ENCODE measurements at regions of chr11 and their contacts with region 1.

Region 1: DNA sequence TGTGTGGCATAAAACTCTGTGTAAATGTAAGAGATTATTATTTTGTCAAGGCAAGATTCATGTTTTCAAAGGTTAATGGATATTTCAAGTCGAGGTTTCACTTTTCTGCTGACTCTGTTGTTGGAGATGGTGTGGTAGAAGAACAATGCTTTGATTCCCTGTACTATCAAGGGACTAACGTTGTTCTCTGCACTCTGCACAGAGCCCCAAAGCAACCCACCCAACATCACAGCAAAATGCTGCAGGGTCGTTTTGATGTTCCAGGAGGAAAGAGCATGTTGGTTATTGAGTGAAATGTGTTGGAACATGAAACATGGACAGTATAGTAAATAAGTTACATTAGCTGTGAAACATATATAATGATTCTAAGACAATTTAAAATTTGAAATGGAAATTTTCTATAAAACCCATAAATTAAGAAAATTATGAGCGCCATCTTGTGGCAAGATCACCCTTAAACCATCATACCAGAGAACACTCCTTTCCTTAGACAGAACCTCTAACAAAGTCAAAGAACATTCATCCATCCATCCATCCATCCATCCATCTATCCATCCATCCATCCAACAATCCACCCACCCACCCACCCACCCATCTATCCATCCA is 164.4 kb upstream of the ZBED5 start:
- DNase-seq: peak; percentile 29
- H3K4me3 Mint-ChIP-seq: no peak overlapping the region
- H3K27ac Mint-ChIP-seq: no peak overlapping the region
- H3K4me1 Mint-ChIP-seq: no peaks in the 10 kb centered on the region
- H3K27me3 Mint-ChIP-seq: no peaks in the 10 kb centered on the region
- CTCF ChIP-seq: peak; percentile 32

Region 2: DNA sequence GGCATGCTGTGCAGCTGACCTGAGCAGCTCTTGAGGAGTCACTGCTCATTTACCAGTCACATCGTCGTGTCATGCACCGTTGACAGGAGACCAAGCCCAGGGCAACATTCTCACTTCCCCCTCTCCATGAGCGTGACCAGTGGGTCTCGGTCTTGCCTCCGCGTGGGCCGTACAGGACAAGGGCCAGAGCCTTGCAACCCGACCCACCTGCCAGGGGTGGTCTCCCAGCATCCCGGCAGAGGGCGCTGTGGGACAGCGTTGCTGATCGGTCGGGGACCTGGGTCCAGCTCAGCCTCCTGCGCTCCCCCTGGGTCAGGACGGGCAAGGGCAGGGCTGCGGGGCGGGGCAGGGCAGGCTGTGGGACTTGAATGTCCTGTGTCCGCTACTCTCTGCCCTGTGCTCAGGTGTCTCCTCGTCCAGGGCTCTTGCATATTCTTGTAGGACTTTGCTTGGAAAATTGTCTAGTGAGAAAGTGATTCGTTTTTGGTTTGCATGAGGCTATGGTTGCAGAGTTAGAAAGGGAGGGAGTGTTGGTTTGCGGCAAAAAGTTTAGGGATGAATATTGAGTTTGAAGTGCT is 229.7 kb before region 1 on chr11:
- CTCF ChIA-PET with region 1: interaction called, 21 read pairs
- intact Hi-C with region 1: loop called (anchors 2 kb)
- DNase-seq: peak; percentile 96
- H3K4me3 Mint-ChIP-seq: peak overlapping the region; percentile 12
- H3K27ac Mint-ChIP-seq: no peak overlapping the region
- H3K4me1 Mint-ChIP-seq: peaks cover 34% of the 10 kb centered on the region
- H3K27me3 Mint-ChIP-seq: no peaks in the 10 kb centered on the region
- CTCF ChIP-seq: peak; percentile 89

Region 3: GRCh38 chr11:10902301-10903063 is 119.7 kb before region 1 on chr11:
- CTCF ChIA-PET with region 1: no interaction called
- intact Hi-C with region 1: no loop called
- DNase-seq: no peak
- H3K4me3 Mint-ChIP-seq: no peak overlapping the region
- H3K27ac Mint-ChIP-seq: peak overlapping the region; percentile 94
- H3K4me1 Mint-ChIP-seq: peaks cover 67% of the 10 kb centered on the region
- H3K27me3 Mint-ChIP-seq: no peaks in the 10 kb centered on the region
- CTCF ChIP-seq: no peak

Region 4: DNA sequence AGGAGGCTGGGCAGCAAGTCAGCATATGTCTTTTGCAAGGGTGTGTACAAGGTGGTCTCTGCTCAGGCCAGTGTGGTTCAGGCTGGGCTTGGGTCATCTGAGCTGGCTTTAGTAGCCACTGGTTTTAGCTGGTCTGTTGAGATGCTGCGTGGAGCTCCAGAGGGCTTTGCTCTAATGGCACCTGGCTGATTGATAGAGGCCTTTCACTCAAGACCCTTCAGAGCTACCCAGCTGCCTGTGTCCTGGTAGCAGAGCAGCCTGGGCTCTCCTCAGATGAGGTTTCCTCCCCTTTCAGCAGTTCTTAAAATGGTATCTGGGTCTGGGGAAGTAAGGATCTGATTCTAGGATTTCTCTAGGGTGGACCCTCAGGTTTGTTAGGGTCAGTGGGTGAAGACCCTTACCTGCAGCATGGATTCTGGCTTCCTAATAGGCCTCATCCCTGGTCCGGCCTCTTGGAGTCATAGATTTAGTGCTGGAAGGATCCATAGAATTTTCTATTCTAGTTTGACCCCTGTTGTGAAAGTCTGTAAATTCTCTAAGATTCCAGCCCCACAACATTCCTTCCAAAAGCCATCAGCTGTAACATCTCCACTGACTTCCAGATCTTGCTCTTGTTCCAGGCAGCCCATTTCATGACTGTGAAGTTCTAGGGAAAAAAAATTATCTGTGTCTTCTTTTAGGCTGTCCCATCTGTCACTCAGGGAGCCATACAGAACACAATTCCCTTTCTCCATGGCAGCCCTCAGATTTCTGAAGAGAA is 25.8 kb after region 1 on chr11:
- CTCF ChIA-PET with region 1: no interaction called
- intact Hi-C with region 1: no loop called
- DNase-seq: no peak
- H3K4me3 Mint-ChIP-seq: no peak overlapping the region
- H3K27ac Mint-ChIP-seq: no peak overlapping the region
- H3K4me1 Mint-ChIP-seq: no peaks in the 10 kb centered on the region
- H3K27me3 Mint-ChIP-seq: peaks cover 34% of the 10 kb centered on the region
- CTCF ChIP-seq: no peak

Measured in Calu3 (cell line).